ENCODE measurements at regions of chr2 and their contacts with region 1.

Region 1: DNA sequence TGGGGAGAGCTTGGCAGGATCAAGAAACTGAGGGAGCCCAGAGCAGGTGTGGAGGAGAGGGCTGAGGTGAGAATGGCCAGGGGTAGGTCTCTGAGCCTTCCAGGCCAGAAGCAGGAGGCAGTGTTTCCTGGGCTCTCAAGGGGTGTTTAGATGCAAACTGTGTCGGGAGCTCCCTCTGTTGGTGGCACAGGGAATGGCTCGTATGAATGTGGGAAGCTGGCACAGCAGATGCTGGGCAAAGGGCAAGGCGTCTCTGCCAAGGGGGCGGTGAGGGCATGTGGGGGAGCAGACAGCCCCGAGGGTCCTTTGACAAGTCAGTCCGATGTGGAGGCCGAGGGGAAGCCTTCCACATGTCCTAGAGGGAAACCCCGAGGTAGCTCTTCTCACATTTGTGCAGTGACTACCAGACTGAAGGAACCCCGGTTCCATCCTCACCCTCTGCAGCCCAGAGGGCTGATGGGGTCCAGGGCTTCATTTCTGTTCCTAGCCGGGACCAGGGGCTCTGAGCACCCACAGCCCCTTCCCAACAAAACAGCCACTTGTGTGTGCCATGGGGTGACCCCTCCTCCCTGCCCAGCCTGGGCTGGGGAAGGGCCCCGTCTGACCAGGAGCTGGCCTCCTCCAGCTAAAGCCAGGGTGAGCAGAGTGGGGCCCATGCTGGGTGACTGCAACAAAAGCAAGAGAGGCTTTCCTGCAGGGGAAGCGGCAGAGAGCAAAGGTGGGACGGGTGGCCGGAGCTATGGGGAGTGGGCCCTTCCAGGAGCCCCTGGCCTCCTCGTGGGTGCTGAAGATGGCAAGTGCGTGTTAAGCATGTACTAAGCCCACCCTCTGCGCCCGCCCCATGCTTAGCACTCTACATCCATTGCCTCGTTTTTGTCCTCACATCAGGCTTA is 103.4 kb downstream of the SEPTIN10 start:
- H3K4me3 ChIP-seq: no peak overlapping the region
- H3K27ac ChIP-seq: no peak overlapping the region
- H3K4me1 ChIP-seq: no peaks in the 10 kb centered on the region
- CTCF ChIP-seq: peak; percentile 90

Region 2: DNA sequence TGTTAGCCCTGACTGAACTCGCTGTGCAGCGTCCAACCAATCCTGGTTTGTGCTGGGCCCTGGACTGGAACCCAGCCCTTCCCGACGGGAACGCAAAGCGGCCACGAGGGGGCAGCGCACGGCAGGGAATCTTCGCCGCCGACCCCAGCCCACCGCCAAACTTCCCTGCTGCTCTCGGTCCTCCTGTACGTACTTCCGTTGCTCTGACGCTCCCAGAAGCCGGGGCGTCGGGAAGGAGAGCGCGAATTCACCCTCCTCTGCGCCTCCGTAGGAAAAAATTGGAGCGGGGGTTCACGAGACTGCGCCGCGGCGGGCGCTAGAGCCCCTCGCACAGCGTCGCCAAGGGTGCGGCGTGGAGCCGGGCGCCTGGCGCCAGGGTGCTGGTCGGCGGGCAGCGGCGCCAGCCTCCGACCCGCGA is 382.3 kb before region 1 on chr2:
- CTCF ChIA-PET with region 1: interaction called, 26 read pairs
- POLR2A ChIA-PET with region 1: no interaction called
- H3K4me3 ChIP-seq: peak overlapping the region; percentile 64
- H3K27ac ChIP-seq: peak overlapping the region; percentile 90
- H3K4me1 ChIP-seq: peaks cover 18% of the 10 kb centered on the region
- CTCF ChIP-seq: peak; percentile 95

Region 3: DNA sequence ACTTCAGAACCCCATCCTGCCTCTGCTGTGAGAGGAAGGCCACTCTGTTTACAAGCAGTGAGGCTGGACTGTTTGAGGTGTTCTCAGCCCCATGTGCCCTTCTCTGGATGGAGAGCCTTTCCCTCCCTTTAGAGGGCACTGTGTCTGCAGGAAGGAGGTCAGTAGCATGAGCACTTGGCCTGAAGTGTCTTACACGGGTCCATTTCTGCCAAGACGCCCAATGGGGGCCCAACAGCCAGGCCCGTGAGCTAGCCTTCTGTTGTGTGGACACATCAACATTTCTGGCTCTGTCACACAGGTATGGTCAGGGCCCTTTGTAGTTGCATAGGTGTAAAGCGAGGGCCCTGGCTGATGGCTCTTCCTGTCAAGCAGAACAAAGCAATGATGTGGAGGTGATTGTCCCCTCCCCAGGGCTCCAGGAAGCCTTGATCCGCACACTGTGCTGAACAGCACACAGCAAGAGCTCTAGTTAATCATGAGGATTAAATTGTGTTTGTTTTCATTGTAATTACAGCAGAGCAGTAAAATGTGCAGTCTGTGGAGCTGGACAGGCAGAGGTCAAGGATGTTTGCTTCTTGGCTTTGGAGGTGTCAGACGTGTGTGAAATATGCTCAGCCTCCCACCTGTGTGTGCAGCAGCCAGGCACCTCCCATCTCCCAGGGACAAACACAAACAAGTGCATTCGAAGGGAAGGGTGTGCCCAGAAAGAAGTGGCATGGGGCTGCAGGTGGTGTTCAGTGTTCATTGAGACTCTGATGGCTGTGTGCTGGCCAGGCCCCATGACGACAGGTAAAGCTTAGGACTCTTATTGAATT is 249.3 kb before region 1 on chr2:
- CTCF ChIA-PET with region 1: interaction called, 15 read pairs
- POLR2A ChIA-PET with region 1: no interaction called
- H3K4me3 ChIP-seq: no peak overlapping the region
- H3K27ac ChIP-seq: peak overlapping the region; percentile 62; the same call in 1 of the 2 replicates
- H3K4me1 ChIP-seq: peaks cover 14% of the 10 kb centered on the region
- CTCF ChIP-seq: peak; percentile 28; the same call in 1 of the 2 replicates

Region 4: DNA sequence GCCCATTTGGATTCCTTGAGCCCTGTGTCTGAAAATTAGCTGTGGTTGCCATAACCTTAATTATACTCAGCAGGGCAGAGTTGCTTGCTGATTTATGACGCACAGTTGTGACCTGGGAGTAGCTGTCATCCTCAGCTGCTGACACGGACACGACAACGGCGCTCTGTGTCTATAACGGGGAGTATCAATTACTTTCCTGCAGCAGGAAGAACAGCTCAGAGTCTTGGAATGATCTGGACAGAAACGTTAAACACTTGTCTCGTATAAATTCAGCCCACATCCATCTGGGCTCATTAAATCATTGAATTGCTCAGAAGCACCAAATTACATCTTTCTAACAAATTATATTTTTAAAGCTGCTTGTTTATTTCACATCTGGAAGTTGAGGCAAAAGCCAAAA is 12.9 kb before region 1 on chr2:
- CTCF ChIA-PET with region 1: interaction called, 15 read pairs
- POLR2A ChIA-PET with region 1: no interaction called
- H3K4me3 ChIP-seq: no peak overlapping the region
- H3K27ac ChIP-seq: no peak overlapping the region
- H3K4me1 ChIP-seq: no peaks in the 10 kb centered on the region
- CTCF ChIP-seq: no peak

Measured in HEK293 (cell line).